HepG2 (cell line): ENCODE measurements at regions of chr12 and their contacts with region 1.

Region 1: DNA sequence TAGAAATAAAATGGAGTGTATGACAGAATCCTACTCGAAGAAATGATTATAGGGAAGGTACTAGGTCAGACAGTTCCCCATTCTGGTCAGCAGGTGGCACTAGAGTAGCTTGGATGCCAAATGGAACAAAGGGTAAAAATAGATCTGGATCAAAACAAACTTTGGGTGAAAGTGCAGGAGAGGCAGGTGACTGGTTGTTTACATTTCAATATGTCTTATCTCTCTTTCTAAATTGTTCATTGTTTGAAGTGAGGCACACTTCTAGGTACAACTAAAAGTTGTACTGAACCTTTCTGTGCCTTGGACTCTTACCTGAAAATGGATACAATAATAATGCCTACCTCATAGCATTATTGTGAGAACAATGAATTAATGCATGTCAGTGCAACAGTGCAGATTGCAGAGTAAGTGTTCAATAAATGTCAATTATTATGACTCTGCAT is 62.0 kb upstream of the OSBPL8 start:
- DNase-seq: peak; percentile 93
- ATAC-seq: peak; percentile 92
- H3K4me3 ChIP-seq: no peak overlapping the region; a peak in 1 of 6 replicates
- H3K27ac ChIP-seq: no peak overlapping the region
- H3K4me1 ChIP-seq: peaks cover 17% of the 10 kb centered on the region
- H3K27me3 ChIP-seq: no peaks in the 10 kb centered on the region
- CTCF ChIP-seq: peak; percentile 89
- EP300 ChIP-seq: peak in 1 of 2 experiments; percentile 82; a peak in 3 of 4 replicates
- POLR2A ChIP-seq: no peak
- RAD21 ChIP-seq: peak; percentile 92

Region 2: DNA sequence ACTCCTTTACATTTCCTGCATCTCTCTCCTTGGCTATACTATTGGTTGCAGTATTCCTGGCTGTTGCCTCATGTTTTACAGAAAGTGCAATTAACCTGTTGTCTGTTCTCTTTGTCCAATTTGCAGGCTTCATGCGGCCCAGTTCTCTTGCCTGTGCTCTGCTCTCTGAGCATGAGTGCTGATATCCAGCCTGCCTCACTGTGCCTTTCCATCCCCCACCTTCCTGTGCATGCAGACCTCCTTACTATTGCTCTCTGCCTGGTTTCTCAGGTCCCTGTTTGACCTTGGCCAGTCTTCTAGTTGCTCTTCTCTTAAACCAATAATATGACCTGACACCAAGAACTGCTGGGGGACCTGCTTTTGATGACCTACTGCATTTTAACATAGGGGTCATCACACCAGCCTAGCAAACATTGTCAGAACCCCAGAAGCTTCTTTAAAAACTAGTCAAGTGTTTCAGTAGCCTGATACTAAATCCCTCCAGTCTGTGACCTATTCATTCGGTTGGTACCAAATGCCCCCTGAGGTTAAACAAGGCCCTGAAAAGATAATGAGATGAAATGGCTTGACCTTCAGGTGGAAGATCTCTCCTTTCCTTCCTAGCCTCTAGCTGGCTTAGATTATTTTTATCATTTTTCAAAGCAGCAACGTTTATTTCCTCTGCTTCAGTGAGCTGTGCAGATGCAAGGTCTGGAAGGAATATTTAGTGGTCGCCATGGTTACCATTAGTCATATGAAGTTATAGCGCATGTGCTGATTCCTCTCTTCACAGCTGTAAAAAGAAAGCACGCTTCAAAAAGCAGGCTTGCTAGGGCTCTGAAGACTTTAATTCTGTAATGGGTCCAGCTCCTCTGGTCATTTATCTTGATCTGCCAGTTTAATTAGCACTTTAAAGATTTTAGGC is 806.5 kb before region 1 on chr12:
- CTCF ChIA-PET with region 1: no interaction called
- POLR2A ChIA-PET with region 1: no interaction called
- in situ Hi-C with region 1: no loop called
- intact Hi-C with region 1: no loop called
- DNase-seq: no peak
- ATAC-seq: no peak
- H3K4me3 ChIP-seq: no peak overlapping the region
- H3K27ac ChIP-seq: no peak overlapping the region
- H3K4me1 ChIP-seq: peaks cover 22% of the 10 kb centered on the region
- H3K27me3 ChIP-seq: peaks cover 0 to 1% of the 10 kb centered on the region in 2 experiments; a peak in 1 of 5 replicates
- CTCF ChIP-seq: no peak
- EP300 ChIP-seq: no peak
- POLR2A ChIP-seq: no peak
- RAD21 ChIP-seq: no peak

Region 3: GRCh38 chr12:76551482-76551888 is 70.1 kb before region 1 on chr12:
- CTCF ChIA-PET with region 1: no interaction called
- POLR2A ChIA-PET with region 1: no interaction called
- in situ Hi-C with region 1: no loop called
- intact Hi-C with region 1: no loop called
- DNase-seq: no peak
- ATAC-seq: no peak
- H3K4me3 ChIP-seq: no peak overlapping the region
- H3K27ac ChIP-seq: no peak overlapping the region
- H3K4me1 ChIP-seq: peaks cover 33% of the 10 kb centered on the region
- H3K27me3 ChIP-seq: no peaks in the 10 kb centered on the region
- CTCF ChIP-seq: no peak
- EP300 ChIP-seq: no peak
- POLR2A ChIP-seq: no peak
- RAD21 ChIP-seq: no peak

Region 4: DNA sequence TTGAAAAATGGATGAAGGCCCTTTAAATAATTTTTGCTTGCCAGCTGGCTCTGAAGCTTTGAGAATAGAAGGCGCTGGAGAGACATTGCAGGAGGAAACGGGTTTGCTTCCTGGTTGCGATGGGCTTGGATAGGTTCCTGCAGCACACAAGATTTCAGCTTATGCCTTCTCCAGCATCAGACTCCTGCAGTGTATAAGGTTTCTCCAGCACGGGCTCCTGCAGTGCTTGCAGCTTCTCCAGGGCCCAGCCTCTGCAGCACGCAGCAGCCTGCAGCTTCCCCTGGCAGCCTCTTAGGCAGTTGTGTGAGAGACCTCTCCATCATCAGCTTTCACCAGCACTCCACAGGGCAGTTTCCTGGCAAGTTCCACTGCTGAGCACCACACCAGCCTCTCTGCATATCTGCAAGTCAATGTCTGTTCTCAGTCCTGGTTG is 63.7 kb after region 1 on chr12:
- CTCF ChIA-PET with region 1: no interaction called
- POLR2A ChIA-PET with region 1: no interaction called
- in situ Hi-C with region 1: no loop called
- intact Hi-C with region 1: loop called (anchors 5 kb)
- DNase-seq: no peak
- ATAC-seq: no peak
- H3K4me3 ChIP-seq: no peak overlapping the region
- H3K27ac ChIP-seq: no peak overlapping the region
- H3K4me1 ChIP-seq: no peaks in the 10 kb centered on the region
- H3K27me3 ChIP-seq: no peaks in the 10 kb centered on the region
- CTCF ChIP-seq: no peak
- EP300 ChIP-seq: no peak
- POLR2A ChIP-seq: no peak
- RAD21 ChIP-seq: no peak

Region 5: GRCh38 chr12:76790564-76791552 is 169.3 kb after region 1 on chr12:
- CTCF ChIA-PET with region 1: interaction called, 37 read pairs
- POLR2A ChIA-PET with region 1: no interaction called
- in situ Hi-C with region 1: loop called (anchors 5 kb)
- intact Hi-C with region 1: loop called (anchors 1 kb)
- DNase-seq: peak; percentile 12
- ATAC-seq: no peak
- H3K4me3 ChIP-seq: no peak overlapping the region
- H3K27ac ChIP-seq: no peak overlapping the region
- H3K4me1 ChIP-seq: 0 out of 2 replicates have a peak, but pooled peaks cover 12% of the 10 kb centered on the region
- H3K27me3 ChIP-seq: no peaks in the 10 kb centered on the region
- CTCF ChIP-seq: peak; percentile 53
- EP300 ChIP-seq: no peak
- POLR2A ChIP-seq: no peak
- RAD21 ChIP-seq: peak; percentile 27; the same call in 1 of the 2 replicates

Region 6: DNA sequence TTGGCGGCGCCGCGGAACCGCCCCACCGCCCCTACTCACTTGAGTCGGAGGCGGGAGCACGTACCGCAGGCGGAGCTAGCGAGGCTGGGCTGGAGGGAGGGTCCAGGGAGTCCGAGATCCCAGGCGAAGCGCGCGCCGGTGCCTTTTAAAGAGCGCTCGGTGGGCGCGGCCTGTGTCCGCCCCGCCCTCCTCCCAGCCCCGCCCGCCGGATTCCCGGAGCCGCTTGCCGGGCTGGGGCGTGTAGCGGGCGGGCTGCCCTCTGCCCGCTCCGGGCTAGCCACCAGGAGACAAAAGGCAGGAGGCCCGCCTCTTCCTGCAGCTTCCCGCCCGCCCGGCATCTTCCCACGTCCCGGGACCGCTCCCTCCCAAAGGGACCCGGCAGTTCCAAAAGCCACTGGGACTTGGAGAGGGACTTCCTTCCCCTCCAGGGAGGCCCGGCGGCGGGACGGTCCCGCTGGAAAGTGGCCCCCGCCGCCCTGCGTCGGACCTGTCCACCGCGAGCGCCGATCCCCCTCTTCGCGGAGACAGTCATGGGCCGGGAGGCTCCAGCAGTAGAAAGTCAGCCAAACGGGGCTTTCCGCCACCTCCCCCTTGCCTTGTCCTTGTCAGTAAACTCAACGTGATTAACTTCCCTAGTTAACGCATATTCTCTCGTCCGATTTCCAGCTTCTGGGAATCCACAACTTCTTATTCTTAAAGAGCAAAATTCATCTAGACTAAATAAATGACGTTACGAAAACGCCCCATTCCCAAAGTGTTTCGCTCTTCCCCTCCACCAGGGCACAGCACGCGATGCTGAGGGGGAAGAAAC is 257.5 kb after region 1 on chr12 and contains the start of gene CSRP2:
- CTCF ChIA-PET with region 1: no interaction called
- POLR2A ChIA-PET with region 1: no interaction called
- in situ Hi-C with region 1: no loop called
- intact Hi-C with region 1: loop called (anchors 2 kb)
- DNase-seq: peak; percentile 79
- ATAC-seq: peak; percentile 93
- H3K4me3 ChIP-seq: peak within 1 kb of the TSS; percentile 72 to 85 (median 77)
- H3K27ac ChIP-seq: no peak within 1 kb of the TSS
- H3K4me1 ChIP-seq: peaks cover 24% of the 10 kb centered on the region
- H3K27me3 ChIP-seq: peaks cover 0 to 5% of the 10 kb centered on the region in 2 experiments; a peak in 1 of 5 replicates
- CTCF ChIP-seq: no peak
- EP300 ChIP-seq: no peak
- POLR2A ChIP-seq: peak in 1 of 2 experiments; percentile 75; a peak in 2 of 4 replicates
- RAD21 ChIP-seq: no peak
- total RNA-seq, gene CSRP2: 7.2 and 9.0 TPM in 2 replicates

Region 7: GRCh38 chr12:76927170-76927784 is 305.7 kb after region 1 on chr12:
- CTCF ChIA-PET with region 1: interaction called, 10 read pairs
- POLR2A ChIA-PET with region 1: no interaction called
- in situ Hi-C with region 1: no loop called
- intact Hi-C with region 1: loop called (anchors 2 kb)
- DNase-seq: peak; percentile 25
- ATAC-seq: peak; percentile 51; the same call in 1 of the 3 replicates
- H3K4me3 ChIP-seq: no peak overlapping the region
- H3K27ac ChIP-seq: no peak overlapping the region
- H3K4me1 ChIP-seq: 0 out of 2 replicates have a peak, but pooled peaks cover 3% of the 10 kb centered on the region
- H3K27me3 ChIP-seq: peaks cover 0 to 1% of the 10 kb centered on the region in 2 experiments; a peak in 1 of 5 replicates
- CTCF ChIP-seq: peak; percentile 52
- EP300 ChIP-seq: no peak
- POLR2A ChIP-seq: no peak
- RAD21 ChIP-seq: no peak

Region 8: GRCh38 chr12:77685112-77685511 is 1063.5 kb after region 1 on chr12:
- CTCF ChIA-PET with region 1: no interaction called
- POLR2A ChIA-PET with region 1: no interaction called
- in situ Hi-C with region 1: loop called (anchors 25 kb)
- intact Hi-C with region 1: loop called (anchors 5 kb)
- DNase-seq: peak; percentile 56
- ATAC-seq: peak; percentile 74
- H3K4me3 ChIP-seq: no peak overlapping the region
- H3K27ac ChIP-seq: no peak overlapping the region
- H3K4me1 ChIP-seq: no peaks in the 10 kb centered on the region
- H3K27me3 ChIP-seq: no peaks in the 10 kb centered on the region
- CTCF ChIP-seq: peak; percentile 74
- EP300 ChIP-seq: no peak
- POLR2A ChIP-seq: no peak
- RAD21 ChIP-seq: no peak